ENCODE measurements at regions of chr4 and their contacts with region 1.

Region 1: GRCh38 chr4:54433686-54434085 is 204.6 kb downstream of the PDGFRA start:
- DNase-seq: no peak
- H3K4me3 Mint-ChIP-seq: no peak overlapping the region
- H3K27ac Mint-ChIP-seq: no peak overlapping the region
- H3K4me1 Mint-ChIP-seq: no peaks in the 10 kb centered on the region
- H3K27me3 Mint-ChIP-seq: peaks cover 47% of the 10 kb centered on the region
- CTCF ChIP-seq: no peak

Region 2: DNA sequence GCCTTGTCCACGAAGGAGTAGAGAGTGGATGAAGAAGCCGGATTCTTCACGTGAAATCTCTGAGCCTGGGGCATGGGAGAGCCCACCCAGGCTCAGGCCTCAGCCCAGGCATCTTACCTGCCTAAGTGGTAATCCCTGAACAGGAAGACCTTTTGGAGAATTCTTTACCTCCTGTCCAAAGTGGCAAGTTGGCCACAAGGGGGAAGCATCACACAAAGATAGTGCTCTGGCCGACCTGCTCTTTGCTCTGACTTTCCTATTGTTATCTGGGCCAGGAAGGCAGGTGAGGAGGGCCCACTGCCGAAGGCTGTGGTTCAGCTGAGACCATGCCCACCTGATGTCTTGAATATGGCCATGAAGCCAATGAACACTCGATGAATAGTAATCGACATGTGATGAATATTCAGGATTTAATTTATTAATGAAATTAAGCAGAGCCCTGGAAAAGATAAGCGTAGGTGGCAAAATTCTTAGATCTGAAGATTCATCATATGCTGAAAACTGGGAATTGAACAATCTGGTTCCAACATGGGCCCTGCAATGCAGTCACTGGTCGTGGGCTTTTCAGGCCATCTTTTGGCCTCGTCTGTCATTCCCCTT is 110.8 kb before region 1 on chr4:
- CTCF ChIA-PET with region 1: no interaction called
- intact Hi-C with region 1: loop called (anchors 2 kb)
- DNase-seq: peak; percentile 67
- H3K4me3 Mint-ChIP-seq: no peak overlapping the region
- H3K27ac Mint-ChIP-seq: no peak overlapping the region
- H3K4me1 Mint-ChIP-seq: no peaks in the 10 kb centered on the region
- H3K27me3 Mint-ChIP-seq: no peaks in the 10 kb centered on the region
- CTCF ChIP-seq: peak; percentile 40

Region 3: DNA sequence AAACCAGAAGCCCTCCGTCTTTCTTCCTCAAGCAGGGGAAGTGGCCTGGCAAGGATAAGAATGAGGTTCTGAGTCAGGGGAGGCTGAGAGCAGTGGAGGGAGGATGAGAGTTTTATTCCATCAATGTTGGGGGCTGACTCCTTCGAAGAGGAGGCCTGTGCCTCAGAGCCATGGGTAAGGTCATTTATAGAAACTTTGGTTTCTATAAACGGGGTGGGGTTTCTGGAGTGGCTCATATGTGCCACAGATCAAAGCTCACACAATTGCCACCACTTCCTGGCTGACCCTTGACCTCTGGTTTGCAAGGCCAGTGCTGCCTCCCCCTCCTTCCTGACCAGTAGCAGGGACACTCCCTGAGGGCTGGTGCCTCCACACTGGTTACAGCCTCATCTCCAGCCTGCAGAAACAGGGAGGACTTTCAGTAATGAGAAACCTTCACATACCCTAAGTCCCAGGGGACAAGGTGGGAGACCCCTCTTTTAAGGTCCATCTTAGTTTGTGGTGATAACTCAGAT is 38.6 kb before region 1 on chr4:
- CTCF ChIA-PET with region 1: no interaction called
- intact Hi-C with region 1: loop called (anchors 5 kb)
- DNase-seq: no peak
- H3K4me3 Mint-ChIP-seq: no peak overlapping the region
- H3K27ac Mint-ChIP-seq: no peak overlapping the region
- H3K4me1 Mint-ChIP-seq: peaks cover 2% of the 10 kb centered on the region
- H3K27me3 Mint-ChIP-seq: peaks cover 29% of the 10 kb centered on the region
- CTCF ChIP-seq: no peak

Measured in Calu3 (cell line).